MCF 10A (cell line): ENCODE measurements at regions of chr14 and their contacts with region 1.

Region 1: DNA sequence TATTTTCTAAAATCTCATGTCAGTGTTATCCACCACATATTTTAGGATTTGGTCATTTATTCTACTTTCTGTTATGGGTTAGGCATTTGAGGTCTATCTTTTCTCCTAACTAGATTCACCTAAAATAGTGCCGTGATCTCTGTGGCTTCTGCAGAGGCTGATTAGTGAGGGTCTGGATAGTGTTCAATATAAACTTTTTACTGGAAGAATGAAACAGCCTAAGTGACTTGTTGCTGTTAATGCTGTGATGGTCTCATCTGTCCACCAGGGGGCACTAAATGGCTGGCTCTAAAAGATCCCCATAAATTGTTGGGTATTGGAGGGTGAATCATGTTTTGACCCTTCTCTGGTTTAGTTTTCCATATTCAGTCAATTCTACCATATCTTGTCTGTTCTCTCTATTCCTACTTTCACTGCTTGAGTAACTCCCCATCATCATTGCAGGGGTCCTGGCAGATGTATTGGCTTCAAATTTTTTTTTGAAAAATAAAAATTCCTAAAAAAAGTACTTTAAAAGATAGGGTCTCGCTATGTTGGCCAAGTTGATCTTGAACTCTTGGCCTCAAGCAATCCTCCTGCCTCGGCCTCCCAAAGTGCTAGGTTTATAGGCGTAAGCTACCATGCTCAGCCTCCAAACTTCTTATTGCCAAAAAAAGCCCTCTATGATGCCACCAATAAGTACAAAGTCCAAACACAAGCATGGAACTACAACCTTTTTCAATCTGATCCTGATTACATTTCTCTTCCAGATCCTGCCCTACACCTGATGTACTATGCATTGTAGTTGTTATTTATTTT is 6.9 kb downstream of the PABPN1 start:
- DNase-seq: peak; percentile 78
- H3K4me3 Mint-ChIP-seq: no peak overlapping the region
- H3K27ac Mint-ChIP-seq: no peak overlapping the region
- H3K4me1 Mint-ChIP-seq: peaks cover 11% of the 10 kb centered on the region
- H3K27me3 Mint-ChIP-seq: no peaks in the 10 kb centered on the region
- CTCF ChIP-seq: peak; percentile 80

Region 2: GRCh38 chr14:23362200-23362599 is 34.1 kb after region 1 on chr14:
- CTCF ChIA-PET with region 1: interaction called, 6 read pairs
- POLR2A ChIA-PET with region 1: no interaction called
- intact Hi-C with region 1: loop called (anchors 1 kb)
- DNase-seq: no peak
- H3K4me3 Mint-ChIP-seq: no peak overlapping the region
- H3K27ac Mint-ChIP-seq: no peak overlapping the region
- H3K4me1 Mint-ChIP-seq: no peaks in the 10 kb centered on the region
- H3K27me3 Mint-ChIP-seq: peaks cover 33% of the 10 kb centered on the region
- CTCF ChIP-seq: no peak

Region 3: DNA sequence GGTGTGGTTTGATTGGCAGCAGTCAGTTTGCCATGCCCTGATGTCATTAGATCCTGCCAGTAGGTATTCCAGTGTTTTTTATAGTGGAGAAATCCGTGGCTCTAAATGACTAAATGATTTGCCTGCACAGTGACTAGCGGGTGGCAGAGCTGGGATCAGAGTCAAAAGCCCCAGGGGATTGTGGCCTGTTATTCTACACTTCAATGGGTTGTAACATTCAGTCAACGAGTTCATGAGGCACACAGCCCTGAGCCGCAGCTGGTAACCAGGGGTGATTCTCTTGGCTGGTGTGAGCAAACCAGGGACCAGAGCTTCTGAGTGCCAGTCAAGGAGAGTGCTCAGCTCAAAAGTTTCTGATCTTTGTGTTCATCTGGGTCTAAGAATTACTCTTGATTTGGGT is 78.1 kb after region 1 on chr14:
- CTCF ChIA-PET with region 1: no interaction called
- POLR2A ChIA-PET with region 1: no interaction called
- intact Hi-C with region 1: no loop called
- DNase-seq: peak; percentile 6
- H3K4me3 Mint-ChIP-seq: no peak overlapping the region
- H3K27ac Mint-ChIP-seq: no peak overlapping the region
- H3K4me1 Mint-ChIP-seq: no peaks in the 10 kb centered on the region
- H3K27me3 Mint-ChIP-seq: peaks cover 90% of the 10 kb centered on the region
- CTCF ChIP-seq: no peak

Region 4: GRCh38 chr14:23457587-23458445 is 129.7 kb after region 1 on chr14:
- CTCF ChIA-PET with region 1: interaction called, 3 read pairs
- POLR2A ChIA-PET with region 1: no interaction called
- intact Hi-C with region 1: loop called (anchors 2 kb)
- DNase-seq: no peak
- H3K4me3 Mint-ChIP-seq: no peak overlapping the region
- H3K27ac Mint-ChIP-seq: no peak overlapping the region
- H3K4me1 Mint-ChIP-seq: no peaks in the 10 kb centered on the region
- H3K27me3 Mint-ChIP-seq: peaks cover 13% of the 10 kb centered on the region
- CTCF ChIP-seq: no peak

Region 5: GRCh38 chr14:23555882-23556699 is 227.9 kb after region 1 on chr14 and contains the start of gene THTPA:
- CTCF ChIA-PET with region 1: interaction called, 25 read pairs
- POLR2A ChIA-PET with region 1: no interaction called
- intact Hi-C with region 1: no loop called
- DNase-seq: peak; percentile 89
- H3K4me3 Mint-ChIP-seq: peak within 1 kb of the TSS; percentile 92
- H3K27ac Mint-ChIP-seq: peak within 1 kb of the TSS; percentile 95
- H3K4me1 Mint-ChIP-seq: peaks cover 13% of the 10 kb centered on the region
- H3K27me3 Mint-ChIP-seq: no peaks in the 10 kb centered on the region
- CTCF ChIP-seq: no peak
- total RNA-seq, gene THTPA: 16.8 and 22.4 TPM in 2 replicates